MCF 10A (cell line): ENCODE measurements at regions of chr2 and their contacts with region 1.

Region 1: GRCh38 chr2:217785544-217786045 is 217.2 kb downstream of the TNS1 start:
- DNase-seq: peak; percentile 62
- H3K4me3 Mint-ChIP-seq: no peak overlapping the region
- H3K27ac Mint-ChIP-seq: no peak overlapping the region
- H3K4me1 Mint-ChIP-seq: peaks cover 5% of the 10 kb centered on the region
- H3K27me3 Mint-ChIP-seq: peaks cover 16% of the 10 kb centered on the region
- CTCF ChIP-seq: peak; percentile 95

Region 2: DNA sequence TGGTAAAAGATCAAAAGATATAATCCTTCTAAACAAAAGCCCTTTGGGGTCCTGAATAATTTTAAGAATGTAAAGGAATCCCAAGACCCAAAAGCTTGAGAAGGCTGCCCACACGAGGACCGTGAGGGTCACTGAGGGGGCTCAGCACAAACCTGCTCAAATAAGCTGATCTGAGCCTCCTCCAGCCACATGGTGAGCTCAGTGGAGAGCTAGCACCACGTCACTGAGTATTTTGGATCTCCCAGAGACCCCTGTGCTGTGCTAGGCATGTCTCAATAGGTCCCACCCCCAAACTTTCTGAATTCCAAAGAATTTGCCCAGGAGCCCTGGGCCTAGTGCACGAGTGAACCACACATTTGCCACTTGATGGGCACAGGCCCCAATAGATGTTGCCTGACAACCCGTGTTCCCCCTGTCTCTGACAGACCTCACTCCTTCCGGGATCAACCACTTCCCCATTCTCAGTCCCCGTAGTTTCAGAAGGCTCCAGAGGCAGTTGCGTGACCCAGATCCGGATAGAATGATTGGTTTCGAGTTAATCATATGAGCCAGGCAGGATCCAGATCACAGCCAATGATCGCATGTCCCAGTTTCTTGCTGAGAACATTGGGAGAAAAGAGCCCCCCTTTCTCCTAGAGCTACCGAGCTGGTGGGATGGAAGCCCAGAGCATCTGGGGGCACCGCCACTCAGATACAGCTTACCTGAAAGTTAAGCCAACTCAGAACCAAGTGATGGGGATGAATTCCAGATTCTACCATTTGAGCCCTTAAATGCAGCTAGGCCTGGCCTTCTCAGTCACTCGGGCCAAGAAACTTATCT is 13.4 kb after region 1 on chr2:
- CTCF ChIA-PET with region 1: interaction called, 59 read pairs
- POLR2A ChIA-PET with region 1: no interaction called
- intact Hi-C with region 1: no loop called
- DNase-seq: no peak
- H3K4me3 Mint-ChIP-seq: no peak overlapping the region
- H3K27ac Mint-ChIP-seq: no peak overlapping the region
- H3K4me1 Mint-ChIP-seq: no peaks in the 10 kb centered on the region
- H3K27me3 Mint-ChIP-seq: no peaks in the 10 kb centered on the region
- CTCF ChIP-seq: no peak

Region 3: DNA sequence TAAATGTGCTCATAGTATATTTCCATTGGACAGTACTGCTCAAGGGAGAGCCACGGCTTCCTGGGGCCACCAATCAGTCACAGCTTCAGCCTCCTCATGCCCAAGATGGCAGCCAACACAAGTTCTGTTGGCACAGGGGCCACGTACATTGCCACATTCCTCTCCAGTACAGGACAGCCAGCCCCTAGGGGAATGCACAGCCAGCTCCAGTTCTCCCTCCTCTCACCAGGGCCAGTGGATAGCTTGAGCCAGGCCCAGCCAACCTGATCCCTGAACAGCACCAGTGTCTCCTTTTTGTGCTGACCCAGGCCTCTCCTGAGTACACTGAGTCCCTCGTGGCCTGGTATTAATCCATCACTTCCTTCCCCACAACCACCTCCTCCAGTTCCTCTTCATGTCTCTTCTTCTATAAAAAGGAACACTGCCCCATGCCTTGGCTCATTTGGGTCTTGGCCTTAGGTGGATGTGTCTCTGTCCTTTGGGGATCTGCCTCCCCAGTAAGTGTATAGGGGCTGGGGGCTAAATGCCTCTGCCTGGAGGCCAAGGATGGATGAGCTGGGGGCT is 48.5 kb after region 1 on chr2:
- CTCF ChIA-PET with region 1: interaction called, 14 read pairs
- POLR2A ChIA-PET with region 1: no interaction called
- intact Hi-C with region 1: no loop called
- DNase-seq: no peak
- H3K4me3 Mint-ChIP-seq: no peak overlapping the region
- H3K27ac Mint-ChIP-seq: no peak overlapping the region
- H3K4me1 Mint-ChIP-seq: no peaks in the 10 kb centered on the region
- H3K27me3 Mint-ChIP-seq: no peaks in the 10 kb centered on the region
- CTCF ChIP-seq: no peak

Region 4: DNA sequence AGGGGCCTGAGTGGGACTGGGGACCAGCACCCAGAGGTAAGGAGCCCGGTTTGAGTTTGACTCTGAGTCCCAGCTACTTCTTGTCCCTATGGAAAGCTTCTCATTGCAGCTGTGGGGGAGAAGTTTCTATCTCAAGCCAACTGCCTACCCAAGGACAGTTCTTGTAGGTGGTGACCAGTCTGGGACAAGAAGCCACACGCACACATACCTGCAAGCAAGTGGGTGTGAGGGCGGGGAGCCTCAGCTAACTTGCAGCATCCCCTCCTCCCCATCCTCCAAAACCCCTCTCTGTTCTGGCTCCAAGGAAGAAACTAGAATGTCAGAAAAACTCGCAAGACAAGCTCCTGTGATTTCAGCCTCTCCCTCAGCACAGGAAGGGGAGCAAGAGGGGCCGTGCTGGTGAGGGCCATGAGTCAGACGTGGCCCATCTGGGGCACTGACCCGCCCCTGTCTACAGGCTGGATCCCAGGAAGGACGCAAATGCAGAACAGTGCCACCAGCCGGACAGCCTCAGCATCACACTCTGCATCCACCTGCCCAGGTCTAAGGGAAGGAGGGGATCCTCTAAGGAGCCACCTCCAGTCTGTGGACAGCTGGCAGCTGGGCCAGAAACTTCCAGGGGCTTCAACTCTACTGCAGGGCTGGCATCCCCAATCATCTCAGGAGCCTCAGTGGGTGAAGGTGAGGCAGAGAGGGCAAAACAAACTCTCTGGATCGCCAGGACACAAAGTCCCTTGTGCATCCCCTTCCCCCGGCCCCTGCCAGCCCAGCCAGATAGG is 113.8 kb after region 1 on chr2:
- CTCF ChIA-PET with region 1: interaction called, 678 read pairs
- POLR2A ChIA-PET with region 1: no interaction called
- intact Hi-C with region 1: no loop called
- DNase-seq: peak; percentile 81
- H3K4me3 Mint-ChIP-seq: no peak overlapping the region
- H3K27ac Mint-ChIP-seq: no peak overlapping the region
- H3K4me1 Mint-ChIP-seq: peaks cover 6% of the 10 kb centered on the region
- H3K27me3 Mint-ChIP-seq: no peaks in the 10 kb centered on the region
- CTCF ChIP-seq: peak; percentile 57

Region 5: DNA sequence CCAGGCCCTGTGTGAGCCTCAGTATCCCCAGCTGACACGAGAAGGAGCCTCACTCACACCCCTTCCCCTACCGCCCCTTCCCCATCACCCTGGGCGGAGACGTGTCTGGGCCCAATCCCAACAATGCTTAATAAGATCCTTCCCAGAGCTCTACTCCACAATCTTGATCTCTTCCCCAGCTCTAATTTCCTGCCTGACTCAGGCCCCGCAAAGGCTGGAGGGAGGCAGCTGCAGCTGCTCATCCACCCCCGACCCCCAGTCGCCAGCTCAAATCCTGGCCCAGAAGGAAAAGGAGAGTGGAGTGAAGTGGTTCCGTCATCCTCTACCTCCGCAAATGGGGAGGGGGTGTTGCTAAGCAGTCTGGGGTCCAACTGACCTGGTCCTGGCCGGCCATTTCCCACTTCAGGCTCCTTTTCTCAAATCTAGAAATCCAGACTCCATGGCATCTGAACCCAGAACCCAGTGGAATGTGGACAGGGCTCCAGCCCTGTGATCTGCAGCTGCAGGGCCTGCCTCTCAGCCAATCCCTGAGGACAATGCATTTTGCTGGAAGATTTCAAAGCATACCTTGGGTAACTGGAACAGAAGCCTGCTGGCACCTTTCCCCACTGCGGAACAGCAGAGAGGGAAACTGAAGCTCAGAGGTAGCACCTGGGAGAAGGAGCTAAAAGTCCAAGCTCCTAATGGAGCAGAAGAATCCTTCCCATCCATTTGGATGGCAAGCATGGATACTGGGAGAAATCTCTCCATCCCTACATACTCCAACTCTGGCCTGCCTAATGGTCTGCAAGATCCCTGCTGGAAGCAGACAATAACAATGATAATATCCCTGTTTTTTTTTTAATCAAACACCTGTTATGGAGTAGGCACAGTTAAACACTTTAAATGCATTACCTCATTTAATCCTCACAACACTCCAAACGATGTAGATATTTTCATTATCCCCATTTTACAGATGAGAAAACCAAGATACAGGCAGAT is 222.8 kb after region 1 on chr2:
- CTCF ChIA-PET with region 1: interaction called, 16 read pairs
- POLR2A ChIA-PET with region 1: interaction called, 3 read pairs
- intact Hi-C with region 1: no loop called
- DNase-seq: no peak
- H3K4me3 Mint-ChIP-seq: no peak overlapping the region
- H3K27ac Mint-ChIP-seq: no peak overlapping the region
- H3K4me1 Mint-ChIP-seq: peaks cover 25% of the 10 kb centered on the region
- H3K27me3 Mint-ChIP-seq: peaks cover 12% of the 10 kb centered on the region
- CTCF ChIP-seq: no peak

Region 6: DNA sequence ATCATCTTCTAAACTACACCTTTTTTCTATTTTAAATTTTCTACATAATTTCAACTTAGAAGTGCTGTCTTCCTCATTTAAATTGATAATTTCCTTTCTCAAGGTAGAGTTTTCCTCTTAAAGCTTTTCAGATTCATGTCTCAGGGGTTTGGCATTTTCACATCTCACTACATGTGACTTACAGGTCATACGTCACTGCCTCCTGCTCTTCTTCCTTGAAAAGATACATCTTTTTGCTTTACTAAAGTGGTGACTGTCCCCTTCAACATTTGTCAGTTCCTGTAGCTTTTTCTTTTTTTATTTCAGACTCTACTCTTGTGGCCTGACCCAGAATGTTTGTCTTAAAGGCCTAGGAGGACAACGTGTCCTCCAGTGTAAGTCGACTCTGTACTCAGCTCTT is 266.3 kb after region 1 on chr2:
- CTCF ChIA-PET with region 1: interaction called, 13 read pairs
- POLR2A ChIA-PET with region 1: no interaction called
- intact Hi-C with region 1: no loop called
- DNase-seq: no peak
- H3K4me3 Mint-ChIP-seq: no peak overlapping the region
- H3K27ac Mint-ChIP-seq: no peak overlapping the region
- H3K4me1 Mint-ChIP-seq: no peaks in the 10 kb centered on the region
- H3K27me3 Mint-ChIP-seq: peaks cover 48% of the 10 kb centered on the region
- CTCF ChIP-seq: no peak